ENCODE measurements at regions of chr10 and their contacts with region 1.

Region 1: DNA sequence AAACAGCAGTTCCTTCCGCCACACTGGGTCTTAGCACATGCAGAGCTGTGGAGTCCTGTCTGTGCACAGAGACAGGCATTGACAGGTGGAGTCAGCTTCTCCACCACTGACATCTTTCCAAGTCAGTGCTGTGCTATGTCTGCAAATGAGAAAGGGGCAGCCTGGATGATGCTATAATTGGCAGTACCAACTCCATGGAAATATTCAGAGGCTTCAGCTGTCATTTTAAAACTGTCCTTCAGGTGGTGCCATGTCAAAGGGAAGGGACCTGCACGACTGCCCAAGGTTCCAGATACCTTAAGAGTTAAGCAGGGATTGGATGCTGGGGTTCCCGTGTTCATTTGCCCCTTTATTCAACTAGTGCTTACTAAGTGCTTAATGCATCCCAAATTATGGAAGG is 258.0 kb upstream of the PRKCQ start:
- DNase-seq: peak in 1 of 9 donors; percentile 11
- ATAC-seq: peak; percentile 46
- H3K4me3 ChIP-seq: no peak overlapping the region
- H3K4me3 Mint-ChIP-seq: no peak overlapping the region
- H3K27ac ChIP-seq: no peak overlapping the region
- H3K27ac Mint-ChIP-seq: no peak overlapping the region
- H3K4me1 ChIP-seq: no peaks in the 10 kb centered on the region
- H3K4me1 Mint-ChIP-seq: peaks cover 0 to 1% (median 0%) of the 10 kb centered on the region in 7 donors
- H3K27me3 ChIP-seq: no peaks in the 10 kb centered on the region
- H3K27me3 Mint-ChIP-seq: peaks cover under 1 to 18% (median 8%) of the 10 kb centered on the region in 5 donors

Region 2: DNA sequence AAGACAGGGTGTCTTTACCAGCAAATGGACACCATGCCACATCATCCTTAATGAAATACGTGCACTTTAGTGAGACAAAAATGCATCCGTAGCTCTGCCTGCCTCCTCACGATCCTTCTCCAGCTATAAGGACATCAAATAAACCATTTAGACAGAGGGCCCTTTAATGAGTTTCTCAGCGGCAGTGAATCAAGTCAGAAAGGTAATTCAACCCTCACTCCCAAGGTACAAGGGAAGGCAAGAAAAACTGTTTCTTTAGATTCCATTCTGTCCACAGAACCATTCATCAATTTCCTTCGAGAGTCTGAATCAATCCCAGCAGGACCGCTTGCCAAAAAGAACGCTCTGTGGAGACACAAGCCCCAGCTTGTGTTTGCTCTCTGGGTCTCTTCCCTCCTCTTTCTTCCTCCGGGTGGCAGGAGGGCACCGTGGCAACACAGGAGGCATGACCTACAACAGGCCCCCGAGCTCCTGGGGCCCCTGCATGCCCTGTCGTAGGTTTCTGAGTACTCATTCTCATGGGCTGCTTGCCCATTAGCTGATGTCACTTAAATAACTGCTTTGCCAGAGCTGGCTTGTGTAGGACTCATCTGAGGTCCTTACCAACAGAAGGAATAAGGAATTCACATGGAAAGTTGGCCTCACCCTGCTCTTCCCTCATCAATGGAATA is 39.7 kb after region 1 on chr10:
- CTCF ChIA-PET with region 1: no interaction called
- POLR2A ChIA-PET with region 1: no interaction called
- intact Hi-C with region 1: no loop called
- DNase-seq: no peak
- ATAC-seq: no peak
- H3K4me3 ChIP-seq: no peak overlapping the region
- H3K4me3 Mint-ChIP-seq: no peak overlapping the region
- H3K27ac ChIP-seq: no peak overlapping the region
- H3K27ac Mint-ChIP-seq: no peak overlapping the region
- H3K4me1 ChIP-seq: no peaks in the 10 kb centered on the region
- H3K4me1 Mint-ChIP-seq: no peaks in the 10 kb centered on the region
- H3K27me3 ChIP-seq: no peaks in the 10 kb centered on the region
- H3K27me3 Mint-ChIP-seq: peaks cover 23 to 64% (median 24%) of the 10 kb centered on the region in 5 donors

Region 3: DNA sequence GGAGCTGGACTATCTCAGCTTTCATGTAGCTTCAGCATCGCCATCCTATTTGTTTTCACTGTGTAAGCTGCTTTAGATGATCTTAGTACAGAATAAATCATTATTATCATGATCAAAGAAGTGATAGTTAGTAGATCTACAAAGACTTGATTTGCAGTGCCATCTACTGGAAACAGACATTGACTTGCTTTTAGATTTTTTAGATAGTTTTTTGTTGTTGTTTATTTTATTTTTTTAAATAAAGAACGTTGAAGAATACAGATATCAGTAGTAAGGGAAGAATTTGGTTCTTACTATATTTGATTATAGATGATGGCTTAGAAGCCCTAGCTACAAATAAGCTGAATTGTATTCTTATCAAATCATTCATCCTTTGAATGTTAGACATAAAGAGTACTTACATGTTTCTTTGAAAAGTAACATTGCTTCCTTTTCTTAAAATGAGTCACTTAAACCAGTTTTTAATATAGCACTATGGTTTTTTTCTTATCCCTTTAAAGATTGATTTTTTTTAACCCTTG is 579.0 kb after region 1 on chr10:
- CTCF ChIA-PET with region 1: no interaction called
- POLR2A ChIA-PET with region 1: no interaction called
- intact Hi-C with region 1: loop called (anchors 5 kb)
- DNase-seq: peak in 7 of 9 donors; percentile 36 to 62 (median 46)
- ATAC-seq: peak; percentile 69
- H3K4me3 ChIP-seq: no peak overlapping the region
- H3K4me3 Mint-ChIP-seq: no peak overlapping the region
- H3K27ac ChIP-seq: no peak overlapping the region
- H3K27ac Mint-ChIP-seq: peak overlapping the region in 3 of 9 donors; percentile 27 to 79 (median 29)
- H3K4me1 ChIP-seq: peaks cover 5 to 10% of the 10 kb centered on the region in 2 donors
- H3K4me1 Mint-ChIP-seq: peaks cover 8 to 35% (median 25%) of the 10 kb centered on the region in 7 donors
- H3K27me3 ChIP-seq: no peaks in the 10 kb centered on the region
- H3K27me3 Mint-ChIP-seq: peaks cover 0 to 33% (median 0%) of the 10 kb centered on the region in 5 donors